IMR-90 (cell line): ENCODE measurements at regions of chr2 and their contacts with region 1.

Region 1: GRCh38 chr2:108583903-108584520 is 49.7 kb downstream of the LIMS1 start:
- DNase-seq: peak; percentile 87
- ATAC-seq: peak; percentile 79
- H3K4me3 ChIP-seq: no peak overlapping the region
- H3K27ac ChIP-seq: no peak overlapping the region
- H3K4me1 ChIP-seq: peaks cover 34% of the 10 kb centered on the region
- H3K27me3 ChIP-seq: no peaks in the 10 kb centered on the region
- CTCF ChIP-seq: peak; percentile 88
- POLR2A ChIP-seq: no peak
- RAD21 ChIP-seq: peak; percentile 98

Region 2: DNA sequence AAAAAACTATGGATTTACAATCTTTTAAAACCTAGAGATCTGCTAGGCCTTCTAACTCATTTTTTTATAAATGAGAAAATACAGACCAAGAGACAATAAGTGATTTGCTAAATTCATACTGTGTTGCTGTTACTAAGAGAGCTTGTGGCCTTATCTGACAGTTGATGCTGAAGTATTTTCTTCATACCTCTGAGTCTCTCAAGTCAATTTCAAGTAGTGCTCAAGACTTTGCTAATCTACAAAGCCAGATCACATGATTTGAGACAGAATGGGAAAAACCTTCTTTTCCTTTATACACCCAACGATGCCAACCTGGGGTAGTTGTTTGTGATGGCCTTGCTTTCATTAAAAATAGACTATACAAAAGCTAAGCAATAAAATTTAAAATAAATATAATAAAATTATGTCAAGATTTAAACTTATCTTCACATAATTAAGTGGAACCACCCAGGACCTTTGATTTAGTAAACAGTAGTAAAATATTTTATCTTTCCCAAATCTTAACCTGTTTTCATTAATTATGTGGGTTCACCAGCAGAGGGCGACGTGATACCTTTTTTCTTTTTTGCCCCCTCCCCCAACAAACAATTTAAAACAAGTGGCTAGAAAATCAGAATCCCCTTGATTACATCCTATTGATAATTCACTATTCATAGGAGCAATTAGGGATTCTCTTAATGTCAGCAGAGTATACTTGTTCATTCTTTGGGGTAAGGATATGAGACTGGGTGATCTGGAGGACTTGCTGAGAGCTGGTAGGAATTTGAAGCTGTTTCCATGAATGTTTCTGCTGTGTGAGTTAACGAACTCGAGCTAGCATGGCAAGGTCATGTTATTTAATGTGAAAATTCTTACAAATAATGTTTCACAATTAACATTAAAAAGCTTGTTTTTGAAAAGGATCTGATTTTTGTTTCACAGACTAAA is 647.3 kb before region 1 on chr2:
- CTCF ChIA-PET with region 1: no interaction called
- POLR2A ChIA-PET with region 1: no interaction called
- dilution Hi-C with region 1: no loop called
- in situ Hi-C with region 1: no loop called
- intact Hi-C with region 1: loop called (anchors 5 kb)
- DNase-seq: no peak
- ATAC-seq: no peak
- H3K4me3 ChIP-seq: no peak overlapping the region
- H3K27ac ChIP-seq: no peak overlapping the region
- H3K4me1 ChIP-seq: no peaks in the 10 kb centered on the region
- H3K27me3 ChIP-seq: no peaks in the 10 kb centered on the region
- CTCF ChIP-seq: peak; percentile 50
- POLR2A ChIP-seq: no peak
- RAD21 ChIP-seq: peak; percentile 38

Region 3: GRCh38 chr2:108194409-108195132 is 389.4 kb before region 1 on chr2:
- CTCF ChIA-PET with region 1: no interaction called
- POLR2A ChIA-PET with region 1: no interaction called
- dilution Hi-C with region 1: no loop called
- in situ Hi-C with region 1: no loop called
- intact Hi-C with region 1: no loop called
- DNase-seq: no peak
- ATAC-seq: no peak
- H3K4me3 ChIP-seq: no peak overlapping the region
- H3K27ac ChIP-seq: no peak overlapping the region
- H3K4me1 ChIP-seq: no peaks in the 10 kb centered on the region
- H3K27me3 ChIP-seq: peaks cover 3% of the 10 kb centered on the region; the same call in 1 of the 2 replicates
- CTCF ChIP-seq: peak; percentile 44
- POLR2A ChIP-seq: no peak
- RAD21 ChIP-seq: peak; percentile 10; the same call in 1 of the 2 replicates

Region 4: DNA sequence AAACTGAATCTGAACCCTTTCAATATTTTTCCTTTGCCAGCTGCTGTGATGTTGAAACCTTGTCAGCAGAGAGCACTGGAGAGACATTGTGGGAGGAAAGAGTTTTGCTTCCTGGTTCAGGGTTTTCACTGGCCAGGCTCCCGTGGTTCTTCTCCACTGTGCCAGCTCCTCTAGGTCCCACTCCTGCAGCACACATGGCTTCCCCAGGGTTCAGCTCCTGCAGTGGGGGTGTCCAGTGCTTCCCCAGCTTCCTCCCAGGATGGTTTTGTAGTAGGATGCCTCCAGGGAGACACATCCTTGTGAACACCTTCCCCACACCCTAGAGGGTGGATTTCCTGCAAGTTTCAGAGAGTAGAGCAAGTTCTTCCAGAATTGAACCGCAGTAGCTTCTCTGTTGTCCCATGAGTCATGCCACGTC is 368.2 kb before region 1 on chr2:
- CTCF ChIA-PET with region 1: interaction called, 4 read pairs
- POLR2A ChIA-PET with region 1: no interaction called
- dilution Hi-C with region 1: no loop called
- in situ Hi-C with region 1: no loop called
- intact Hi-C with region 1: loop called (anchors 2 kb)
- DNase-seq: peak; percentile 51
- ATAC-seq: peak; percentile 71
- H3K4me3 ChIP-seq: no peak overlapping the region
- H3K27ac ChIP-seq: no peak overlapping the region
- H3K4me1 ChIP-seq: no peaks in the 10 kb centered on the region
- H3K27me3 ChIP-seq: no peaks in the 10 kb centered on the region
- CTCF ChIP-seq: peak; percentile 58
- POLR2A ChIP-seq: no peak
- RAD21 ChIP-seq: peak; percentile 68

Region 5: DNA sequence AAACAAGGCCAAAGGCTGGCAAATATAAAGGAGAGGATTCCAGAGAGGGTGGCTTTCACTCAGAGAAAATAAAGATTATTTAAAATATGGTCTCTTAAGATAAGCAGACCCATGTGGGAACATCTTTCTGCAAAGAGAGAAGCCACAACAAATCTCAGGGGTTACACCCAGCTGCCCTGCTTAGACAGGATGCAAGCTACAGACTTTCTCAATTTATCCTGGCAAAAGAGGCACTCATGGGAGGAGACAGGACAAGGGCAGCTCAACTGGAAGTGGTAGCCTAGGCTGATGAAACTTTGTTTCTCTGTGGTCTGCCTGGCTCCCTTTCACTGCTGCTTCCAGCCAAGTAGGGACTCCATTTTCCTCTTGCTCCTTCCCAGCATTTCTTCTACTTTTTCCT is 232.1 kb before region 1 on chr2:
- CTCF ChIA-PET with region 1: interaction called, 4 read pairs
- POLR2A ChIA-PET with region 1: no interaction called
- dilution Hi-C with region 1: no loop called
- in situ Hi-C with region 1: loop called (anchors 5 kb)
- intact Hi-C with region 1: loop called (anchors 1 kb)
- DNase-seq: no peak
- ATAC-seq: no peak
- H3K4me3 ChIP-seq: no peak overlapping the region
- H3K27ac ChIP-seq: no peak overlapping the region
- H3K4me1 ChIP-seq: no peaks in the 10 kb centered on the region
- H3K27me3 ChIP-seq: peaks cover 19% of the 10 kb centered on the region
- CTCF ChIP-seq: no peak
- POLR2A ChIP-seq: no peak
- RAD21 ChIP-seq: no peak

Region 6: DNA sequence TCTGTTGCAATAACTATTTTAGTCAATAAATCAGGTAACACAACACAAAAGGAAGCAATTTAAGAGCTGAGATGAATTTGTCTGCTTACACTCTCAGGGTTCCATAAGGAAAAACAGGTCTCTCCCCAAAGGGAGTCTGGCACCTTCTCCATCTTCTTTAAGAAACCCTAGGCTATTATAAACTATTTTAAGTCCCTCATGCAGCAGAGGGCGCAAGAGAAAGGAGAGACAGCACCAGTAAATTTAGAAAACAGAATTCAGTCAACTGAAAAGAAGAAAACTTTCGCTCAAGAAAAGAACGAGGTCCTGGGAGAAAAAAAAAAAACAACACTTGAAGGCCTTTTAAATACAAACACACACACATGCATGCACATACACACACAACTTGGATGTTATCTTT is 187.2 kb before region 1 on chr2:
- CTCF ChIA-PET with region 1: interaction called, 3 read pairs
- POLR2A ChIA-PET with region 1: no interaction called
- dilution Hi-C with region 1: no loop called
- in situ Hi-C with region 1: no loop called
- intact Hi-C with region 1: loop called (anchors 1 kb)
- DNase-seq: peak; percentile 47
- ATAC-seq: no peak
- H3K4me3 ChIP-seq: no peak overlapping the region
- H3K27ac ChIP-seq: no peak overlapping the region
- H3K4me1 ChIP-seq: no peaks in the 10 kb centered on the region
- H3K27me3 ChIP-seq: no peaks in the 10 kb centered on the region
- CTCF ChIP-seq: peak; percentile 49
- POLR2A ChIP-seq: no peak
- RAD21 ChIP-seq: peak; percentile 54

Region 7: GRCh38 chr2:108423502-108424252 is 160.3 kb before region 1 on chr2:
- CTCF ChIA-PET with region 1: no interaction called
- POLR2A ChIA-PET with region 1: no interaction called
- dilution Hi-C with region 1: no loop called
- in situ Hi-C with region 1: no loop called
- intact Hi-C with region 1: no loop called
- DNase-seq: no peak
- ATAC-seq: no peak
- H3K4me3 ChIP-seq: no peak overlapping the region
- H3K27ac ChIP-seq: no peak overlapping the region
- H3K4me1 ChIP-seq: no peaks in the 10 kb centered on the region
- H3K27me3 ChIP-seq: no peaks in the 10 kb centered on the region
- CTCF ChIP-seq: no peak
- POLR2A ChIP-seq: no peak
- RAD21 ChIP-seq: no peak

Region 8: GRCh38 chr2:108492364-108492763 is 91.6 kb before region 1 on chr2:
- CTCF ChIA-PET with region 1: interaction called, 3 read pairs
- POLR2A ChIA-PET with region 1: no interaction called
- dilution Hi-C with region 1: no loop called
- in situ Hi-C with region 1: no loop called
- intact Hi-C with region 1: loop called (anchors 2 kb)
- DNase-seq: peak; percentile 94
- ATAC-seq: peak; percentile 93
- H3K4me3 ChIP-seq: no peak overlapping the region
- H3K27ac ChIP-seq: no peak overlapping the region
- H3K4me1 ChIP-seq: peaks cover 3% of the 10 kb centered on the region; the same call in 1 of the 2 replicates
- H3K27me3 ChIP-seq: no peaks in the 10 kb centered on the region
- CTCF ChIP-seq: no peak
- POLR2A ChIP-seq: no peak
- RAD21 ChIP-seq: peak; percentile 38; the same call in 1 of the 2 replicates

Region 9: GRCh38 chr2:108533832-108534583 is 50.0 kb before region 1 on chr2 and contains the start of gene LIMS1:
- CTCF ChIA-PET with region 1: no interaction called
- POLR2A ChIA-PET with region 1: no interaction called
- dilution Hi-C with region 1: no loop called
- in situ Hi-C with region 1: no loop called
- intact Hi-C with region 1: loop called (anchors 2 kb)
- DNase-seq: peak; percentile 82
- ATAC-seq: peak; percentile 94
- H3K4me3 ChIP-seq: peak within 1 kb of the TSS; percentile 95
- H3K27ac ChIP-seq: peak within 1 kb of the TSS; percentile 93
- H3K4me1 ChIP-seq: peaks cover 10% of the 10 kb centered on the region
- H3K27me3 ChIP-seq: no peaks in the 10 kb centered on the region
- CTCF ChIP-seq: no peak
- POLR2A ChIP-seq: peak; percentile 97
- RAD21 ChIP-seq: no peak
- total RNA-seq, gene LIMS1: 125 and 131 TPM in 2 replicates